GM12878 (cell line): ENCODE measurements at regions of chr1 and their contacts with region 1.

Region 1: DNA sequence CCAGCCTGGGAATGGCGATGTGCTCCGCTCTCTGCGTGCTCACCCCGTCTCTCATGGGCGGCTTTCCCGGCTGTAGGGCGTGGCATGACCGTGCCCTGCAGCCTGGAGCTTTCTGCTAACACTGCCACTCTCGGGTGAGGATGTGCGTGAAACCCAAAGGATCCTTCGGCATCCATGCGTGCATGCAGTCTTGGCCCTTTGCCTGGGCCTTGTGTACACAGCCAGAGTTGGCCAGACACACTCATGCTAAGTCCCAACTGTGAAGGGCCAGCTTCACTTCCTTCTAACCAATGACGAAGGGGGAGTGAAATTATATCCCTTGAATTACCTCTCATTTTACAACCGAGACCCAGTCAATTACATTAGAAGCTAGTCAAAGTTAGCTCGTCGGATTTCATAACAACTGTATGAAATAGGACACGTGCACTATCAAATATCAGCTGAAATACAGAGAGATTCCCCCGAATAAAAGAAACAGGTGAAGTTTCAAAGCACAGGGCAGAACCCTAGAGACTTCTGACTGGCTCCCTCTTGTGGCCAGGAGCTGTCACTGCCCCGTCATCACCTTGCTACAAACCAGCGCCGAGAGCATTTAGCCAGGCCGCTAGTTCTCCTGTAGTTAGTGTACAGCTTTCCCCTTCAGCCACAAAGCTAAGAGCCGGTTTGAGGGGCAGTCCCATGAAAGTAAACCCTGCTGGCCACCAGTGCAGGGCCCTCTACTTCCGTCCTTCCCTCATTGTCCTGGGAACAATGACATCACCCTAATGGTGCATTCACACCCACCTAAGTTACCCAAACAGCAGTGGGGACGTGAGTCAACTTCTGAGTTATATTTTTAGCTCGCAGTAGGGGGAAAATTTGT is 63.4 kb upstream of the COA6 start:
- DNase-seq: no peak
- ATAC-seq: peak; percentile 93
- H3K4me3 ChIP-seq: no peak overlapping the region
- H3K27ac ChIP-seq: no peak overlapping the region
- H3K4me1 ChIP-seq: peaks cover 10% of the 10 kb centered on the region
- H3K27me3 ChIP-seq: no peaks in the 10 kb centered on the region; a peak in 1 of 4 replicates
- CTCF ChIP-seq: peak; percentile 88 to 93 (median 91)
- EP300 ChIP-seq: no peak
- POLR2A ChIP-seq: no peak
- RAD21 ChIP-seq: peak; percentile 80

Region 2: GRCh38 chr1:233805786-233806185 is 504.0 kb before region 1 on chr1:
- CTCF ChIA-PET with region 1: no interaction called
- POLR2A ChIA-PET with region 1: no interaction called
- RAD21 ChIA-PET with region 1: no interaction called
- SMC1A ChIA-PET with region 1: no interaction called
- in situ Hi-C with region 1: no loop called
- intact Hi-C with region 1: no loop called
- DNase-seq: no peak
- ATAC-seq: no peak
- H3K4me3 ChIP-seq: no peak overlapping the region
- H3K27ac ChIP-seq: no peak overlapping the region
- H3K4me1 ChIP-seq: no peaks in the 10 kb centered on the region
- H3K27me3 ChIP-seq: no peaks in the 10 kb centered on the region
- CTCF ChIP-seq: no peak
- EP300 ChIP-seq: no peak
- POLR2A ChIP-seq: no peak
- RAD21 ChIP-seq: no peak

Region 3: GRCh38 chr1:234149217-234149616 is 160.6 kb before region 1 on chr1:
- CTCF ChIA-PET with region 1: interaction called, 39 read pairs
- POLR2A ChIA-PET with region 1: no interaction called
- RAD21 ChIA-PET with region 1: interaction called, 10 read pairs
- SMC1A ChIA-PET with region 1: interaction called, 21 read pairs
- in situ Hi-C with region 1: loop called (anchors 5 kb)
- intact Hi-C with region 1: loop called (anchors 1 kb)
- DNase-seq: no peak
- ATAC-seq: peak; percentile 45
- H3K4me3 ChIP-seq: no peak overlapping the region
- H3K27ac ChIP-seq: no peak overlapping the region
- H3K4me1 ChIP-seq: no peaks in the 10 kb centered on the region
- H3K27me3 ChIP-seq: no peaks in the 10 kb centered on the region; a peak in 1 of 4 replicates
- CTCF ChIP-seq: no peak
- EP300 ChIP-seq: no peak
- POLR2A ChIP-seq: no peak
- RAD21 ChIP-seq: no peak

Region 4: DNA sequence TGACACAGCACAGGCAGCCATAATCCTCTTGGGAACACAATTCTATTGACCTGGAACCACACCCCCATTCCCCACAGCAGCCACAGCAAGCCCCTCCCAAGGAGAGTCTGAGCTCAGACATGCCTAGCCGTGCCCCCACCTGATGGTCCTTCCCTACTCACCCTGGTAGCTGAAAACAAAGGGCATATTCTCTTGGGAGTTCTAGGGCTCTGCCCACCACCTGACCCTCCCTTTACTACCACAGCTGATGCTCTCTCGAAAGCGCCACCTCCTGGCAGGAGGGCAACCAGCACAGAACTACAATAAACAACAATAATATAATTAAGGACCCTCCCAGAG is 121.4 kb before region 1 on chr1:
- CTCF ChIA-PET with region 1: interaction called, 18 read pairs
- POLR2A ChIA-PET with region 1: no interaction called
- RAD21 ChIA-PET with region 1: no interaction called
- SMC1A ChIA-PET with region 1: interaction called, 3 read pairs
- in situ Hi-C with region 1: no loop called
- intact Hi-C with region 1: no loop called
- DNase-seq: peak; percentile 12
- ATAC-seq: peak; percentile 54
- H3K4me3 ChIP-seq: no peak overlapping the region
- H3K27ac ChIP-seq: no peak overlapping the region
- H3K4me1 ChIP-seq: no peaks in the 10 kb centered on the region
- H3K27me3 ChIP-seq: peaks cover 0 to 2% of the 10 kb centered on the region in 2 experiments; a peak in 3 of 4 replicates
- CTCF ChIP-seq: peak; percentile 14 to 39 (median 29); a peak in 4 of 6 replicates
- EP300 ChIP-seq: no peak
- POLR2A ChIP-seq: no peak
- RAD21 ChIP-seq: no peak

Region 5: GRCh38 chr1:234235434-234235881 is 74.4 kb before region 1 on chr1:
- CTCF ChIA-PET with region 1: interaction called, 33 read pairs
- POLR2A ChIA-PET with region 1: no interaction called
- RAD21 ChIA-PET with region 1: interaction called, 6 read pairs
- SMC1A ChIA-PET with region 1: interaction called, 3 read pairs
- in situ Hi-C with region 1: no loop called
- intact Hi-C with region 1: no loop called
- DNase-seq: no peak
- ATAC-seq: no peak
- H3K4me3 ChIP-seq: no peak overlapping the region
- H3K27ac ChIP-seq: no peak overlapping the region
- H3K4me1 ChIP-seq: peaks cover 6% of the 10 kb centered on the region
- H3K27me3 ChIP-seq: no peaks in the 10 kb centered on the region
- CTCF ChIP-seq: no peak
- EP300 ChIP-seq: no peak
- POLR2A ChIP-seq: no peak
- RAD21 ChIP-seq: no peak

Region 6: GRCh38 chr1:234271243-234271606 is 38.6 kb before region 1 on chr1:
- CTCF ChIA-PET with region 1: interaction called, 13 read pairs
- POLR2A ChIA-PET with region 1: no interaction called
- RAD21 ChIA-PET with region 1: interaction called, 5 read pairs
- SMC1A ChIA-PET with region 1: interaction called, 17 read pairs
- in situ Hi-C with region 1: no loop called
- intact Hi-C with region 1: loop called (anchors 2 kb)
- DNase-seq: peak; percentile 89
- ATAC-seq: peak; percentile 96
- H3K4me3 ChIP-seq: no peak overlapping the region
- H3K27ac ChIP-seq: peak overlapping the region; percentile 90
- H3K4me1 ChIP-seq: peaks cover 20% of the 10 kb centered on the region
- H3K27me3 ChIP-seq: no peaks in the 10 kb centered on the region
- CTCF ChIP-seq: no peak
- EP300 ChIP-seq: peak; percentile 97 to 99
- POLR2A ChIP-seq: no peak
- RAD21 ChIP-seq: no peak

Region 7: GRCh38 chr1:234320549-234320948 is 10.7 kb after region 1 on chr1:
- CTCF ChIA-PET with region 1: interaction called, 127 read pairs
- POLR2A ChIA-PET with region 1: no interaction called
- RAD21 ChIA-PET with region 1: interaction called, 9 read pairs
- SMC1A ChIA-PET with region 1: interaction called, 30 read pairs
- in situ Hi-C with region 1: no loop called
- intact Hi-C with region 1: no loop called
- DNase-seq: no peak
- ATAC-seq: no peak
- H3K4me3 ChIP-seq: no peak overlapping the region
- H3K27ac ChIP-seq: no peak overlapping the region
- H3K4me1 ChIP-seq: peaks cover 5% of the 10 kb centered on the region
- H3K27me3 ChIP-seq: no peaks in the 10 kb centered on the region
- CTCF ChIP-seq: no peak
- EP300 ChIP-seq: no peak
- POLR2A ChIP-seq: no peak
- RAD21 ChIP-seq: no peak

Region 8: DNA sequence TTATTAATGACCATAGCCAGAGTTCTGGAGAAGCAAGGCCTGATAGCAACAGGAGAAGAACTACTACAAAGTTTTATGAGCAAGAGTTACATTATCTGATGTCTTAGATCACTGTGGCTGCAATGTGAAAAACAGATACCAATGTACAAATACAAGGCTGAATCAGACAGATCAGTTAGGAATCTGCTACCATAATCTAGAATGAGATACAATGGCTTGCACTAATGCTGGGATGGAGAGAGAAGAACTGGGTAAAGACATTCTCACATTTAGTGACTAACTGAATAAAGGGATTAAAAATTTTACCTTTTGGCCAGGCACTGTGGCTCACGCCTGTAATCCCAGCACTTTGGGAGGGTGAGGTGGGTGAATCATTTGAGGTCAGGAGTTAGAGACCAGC is 976.8 kb after region 1 on chr1:
- CTCF ChIA-PET with region 1: no interaction called
- POLR2A ChIA-PET with region 1: no interaction called
- RAD21 ChIA-PET with region 1: no interaction called
- SMC1A ChIA-PET with region 1: no interaction called
- in situ Hi-C with region 1: no loop called
- intact Hi-C with region 1: no loop called
- DNase-seq: no peak
- ATAC-seq: no peak
- H3K4me3 ChIP-seq: no peak overlapping the region
- H3K27ac ChIP-seq: no peak overlapping the region
- H3K4me1 ChIP-seq: no peaks in the 10 kb centered on the region; the same call in 1 of the 2 replicates
- H3K27me3 ChIP-seq: no peaks in the 10 kb centered on the region
- CTCF ChIP-seq: no peak
- EP300 ChIP-seq: no peak
- POLR2A ChIP-seq: no peak
- RAD21 ChIP-seq: no peak